ENCODE measurements at regions of chr4 and their contacts with region 1.

Region 1: DNA sequence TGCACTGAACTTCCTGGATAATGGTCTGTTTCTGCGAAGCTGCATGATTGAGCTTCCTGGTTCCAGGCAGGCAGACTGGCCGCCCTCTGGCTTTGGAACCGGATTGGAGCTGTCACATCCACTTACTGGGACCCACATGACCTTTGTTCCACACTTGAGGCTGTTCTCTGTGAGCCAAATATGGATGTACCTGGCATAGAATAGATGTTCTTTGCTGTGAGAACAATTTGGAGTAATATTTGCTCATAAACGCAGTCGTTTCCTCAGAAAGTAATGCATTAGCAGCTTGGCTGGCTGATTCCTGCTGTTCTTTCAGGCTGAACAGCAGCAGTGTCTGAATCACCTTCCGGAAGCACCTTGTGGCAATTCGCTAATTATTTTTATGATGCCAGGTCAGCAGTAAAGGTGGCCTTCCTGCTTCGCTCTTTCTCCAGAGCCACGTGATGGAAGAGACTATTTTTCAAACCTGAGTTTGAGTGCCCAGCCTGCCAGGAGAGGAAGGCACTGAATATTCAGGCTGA is 78.1 kb upstream of the BOD1L1 start:
- DNase-seq: peak; percentile 40 to 55
- ATAC-seq: peak; percentile 78 to 96 (median 93)
- H3K4me3 ChIP-seq: peak overlapping the region in 2 of 10 donors; percentile 9 to 18
- H3K27ac ChIP-seq: peak overlapping the region; percentile 71 to 89 (median 84)
- H3K4me1 ChIP-seq: peaks cover 0 to 29% (median 16%) of the 10 kb centered on the region in 9 donors
- H3K27me3 ChIP-seq: no peaks in the 10 kb centered on the region
- CTCF ChIP-seq: peak in 1 of 9 donors; percentile 12

Region 2: DNA sequence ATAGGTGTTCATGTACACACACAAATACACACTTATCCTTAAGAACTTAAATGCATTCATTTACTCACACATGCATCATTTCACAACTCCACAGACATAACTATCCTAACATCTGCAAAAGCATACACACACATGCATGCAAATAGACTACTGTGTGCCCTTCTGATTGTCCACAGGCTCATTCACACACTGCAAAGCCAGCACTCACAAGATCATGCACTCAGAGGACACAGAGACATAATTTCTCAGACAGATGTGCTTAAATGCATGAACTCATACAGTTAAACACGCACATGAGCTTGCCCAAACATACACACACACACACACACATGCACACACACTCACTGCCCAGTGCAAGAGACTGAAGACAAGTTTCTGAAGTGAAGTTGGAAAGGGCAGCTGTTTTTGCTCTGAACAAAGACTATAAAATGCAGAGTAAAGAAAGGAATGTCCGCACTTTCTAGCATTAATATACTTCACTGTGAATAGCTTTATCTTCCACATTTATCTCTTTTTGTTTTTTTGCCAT is 1258.9 kb before region 1 on chr4:
- intact Hi-C with region 1: no loop called
- DNase-seq: no peak
- ATAC-seq: peak in 2 of 8 donors; percentile 16 to 51
- H3K4me3 ChIP-seq: no peak overlapping the region
- H3K27ac ChIP-seq: no peak overlapping the region
- H3K4me1 ChIP-seq: peaks cover 0 to 10% (median 0%) of the 10 kb centered on the region in 9 donors
- H3K27me3 ChIP-seq: no peaks in the 10 kb centered on the region
- CTCF ChIP-seq: no peak

Region 3: GRCh38 chr4:13840502-13841190 is 135.1 kb after region 1 on chr4:
- intact Hi-C with region 1: loop called in 1 of 10 experiments (anchors 10 kb)
- DNase-seq: peak in 1 of 2 donors; percentile 6
- ATAC-seq: peak in 6 of 8 donors; percentile 22 to 69 (median 50)
- H3K4me3 ChIP-seq: peak overlapping the region in 9 of 10 donors; percentile 4 to 42 (median 22)
- H3K27ac ChIP-seq: peak overlapping the region in 5 of 10 donors; percentile 27 to 59 (median 44)
- H3K4me1 ChIP-seq: peaks cover 0 to 8% (median 0%) of the 10 kb centered on the region in 9 donors
- H3K27me3 ChIP-seq: no peaks in the 10 kb centered on the region
- CTCF ChIP-seq: no peak

Measured in heart right ventricle (tissue), 16 donors.